Posterior vena cava (tissue), 2 donors: ENCODE measurements at regions of chr5 and their contacts with region 1.

Region 1: DNA sequence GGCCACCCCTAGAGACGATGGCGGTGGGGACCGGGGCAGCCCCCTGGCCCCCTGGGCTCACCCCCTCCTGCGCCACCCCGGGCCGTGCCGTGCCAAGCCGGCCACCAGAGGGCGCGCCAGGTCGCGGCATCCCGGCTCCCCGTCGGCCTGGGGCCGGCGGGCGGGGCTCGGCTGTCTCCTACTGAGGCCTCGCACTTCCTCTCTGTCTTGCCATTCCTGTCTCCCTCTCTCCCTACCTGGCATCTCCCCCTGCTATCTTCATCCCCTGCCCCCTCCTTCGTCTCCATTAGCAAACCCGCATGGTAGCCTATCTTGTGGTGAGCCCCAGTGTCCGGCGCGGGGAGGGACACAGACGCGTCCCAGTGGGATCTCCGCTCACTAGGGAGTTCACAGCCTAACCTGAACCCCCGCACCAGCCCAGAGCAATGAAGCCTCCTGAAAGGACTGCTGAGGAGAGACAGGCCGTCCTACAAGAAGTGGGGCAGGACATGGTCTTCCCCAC is 29.8 kb upstream of the FABP6 start:
- DNase-seq: peak; percentile 92

Region 2: DNA sequence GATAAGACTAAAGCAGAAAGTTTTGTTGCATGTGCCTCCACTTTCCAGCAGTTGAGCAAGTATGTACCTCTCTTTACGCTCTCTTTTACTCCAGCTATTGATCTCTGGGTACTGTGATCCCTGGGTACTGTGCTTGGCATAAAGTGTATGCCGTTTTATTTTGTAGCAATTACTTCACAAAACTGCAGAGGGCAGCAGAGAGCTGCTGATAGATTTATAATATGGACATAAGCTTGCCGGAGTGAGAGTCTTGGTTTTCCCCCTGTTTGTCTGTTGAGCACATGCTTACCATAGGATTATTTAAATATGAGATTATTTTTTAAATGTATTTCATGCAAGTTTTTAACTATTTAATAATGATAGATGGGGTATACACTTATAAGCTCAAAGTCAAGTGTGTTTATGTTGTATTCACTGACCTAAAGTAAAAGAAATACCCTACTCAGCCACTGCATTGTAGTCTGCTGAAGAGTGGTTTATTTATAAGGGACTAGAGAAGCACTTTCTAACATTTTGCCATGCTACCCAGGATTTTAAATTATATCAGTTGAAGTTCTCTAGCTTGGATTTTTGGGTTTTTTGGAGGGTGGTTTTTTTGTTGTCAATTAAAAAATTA is 177.5 kb before region 1 on chr5:
- intact Hi-C with region 1: loop called in 1 of 2 experiments (anchors 5 kb)
- DNase-seq: no peak

Region 3: DNA sequence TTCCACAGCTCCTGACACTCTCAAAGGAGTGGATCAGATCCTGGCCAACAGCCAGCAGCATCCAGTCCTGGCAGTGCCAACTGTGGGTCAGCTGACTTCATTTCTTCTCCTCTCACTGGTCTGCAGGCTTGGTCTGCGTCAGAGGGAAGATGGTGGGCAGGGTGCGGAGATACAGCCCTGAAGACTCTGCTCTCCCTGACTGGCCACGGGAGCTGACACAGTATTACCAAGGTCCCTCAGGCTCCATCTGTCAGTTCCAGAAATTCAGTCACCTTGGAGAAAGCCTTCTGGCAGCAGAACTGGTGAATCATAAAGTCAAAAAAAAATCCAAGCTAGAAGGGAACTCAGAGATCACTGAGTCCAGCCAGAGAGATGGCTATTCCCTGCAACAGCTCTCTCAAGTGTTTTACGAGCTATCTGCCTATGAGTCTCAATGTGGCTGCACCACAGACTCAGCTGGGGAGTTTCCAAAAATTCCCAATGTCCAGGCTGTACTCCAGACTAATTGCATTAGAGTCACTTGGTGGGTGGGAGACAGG is 143.0 kb after region 1 on chr5:
- intact Hi-C with region 1: loop called (anchors 1 to 2 kb)
- DNase-seq: no peak

Region 4: GRCh38 chr5:160382346-160382745 is 182.9 kb after region 1 on chr5:
- intact Hi-C with region 1: loop called in 1 of 2 experiments (anchors 5 kb)
- DNase-seq: no peak

Region 5: GRCh38 chr5:160390787-160391696 is 191.6 kb after region 1 on chr5:
- intact Hi-C with region 1: loop called (anchors 5 kb)
- DNase-seq: no peak